ENCODE measurements at regions of chr16 and their contacts with region 1.

Region 1: DNA sequence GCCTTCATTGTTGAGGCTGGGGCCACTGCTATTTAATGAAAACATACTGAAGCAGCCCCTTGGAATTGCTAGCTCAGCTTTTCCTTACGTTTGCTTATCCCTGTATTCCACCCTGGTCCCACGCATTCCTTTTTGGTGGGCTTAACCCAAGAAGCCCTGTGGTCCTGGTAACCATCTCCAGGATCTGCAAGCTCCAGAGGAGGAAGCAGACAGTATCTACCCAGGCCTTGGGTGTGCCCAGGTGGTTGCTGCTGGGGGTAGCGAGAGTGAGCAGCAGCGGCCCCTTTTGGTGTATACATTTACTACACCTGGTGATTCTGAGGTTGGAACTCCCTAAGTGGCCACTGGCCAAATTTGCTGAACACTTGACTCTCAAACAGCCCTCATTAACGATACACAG is 97.7 kb downstream of the CBLN1 start:
- DNase-seq: peak; percentile 73
- H3K4me3 ChIP-seq: no peak overlapping the region
- H3K27ac ChIP-seq: no peak overlapping the region
- H3K4me1 ChIP-seq: peaks cover 0 to 47% (median 25%) of the 10 kb centered on the region in 4 donors
- H3K27me3 ChIP-seq: no peaks in the 10 kb centered on the region
- CTCF ChIP-seq: peak; percentile 30 to 65 (median 54)
- EP300 ChIP-seq: no peak
- POLR2A ChIP-seq: no peak

Region 2: DNA sequence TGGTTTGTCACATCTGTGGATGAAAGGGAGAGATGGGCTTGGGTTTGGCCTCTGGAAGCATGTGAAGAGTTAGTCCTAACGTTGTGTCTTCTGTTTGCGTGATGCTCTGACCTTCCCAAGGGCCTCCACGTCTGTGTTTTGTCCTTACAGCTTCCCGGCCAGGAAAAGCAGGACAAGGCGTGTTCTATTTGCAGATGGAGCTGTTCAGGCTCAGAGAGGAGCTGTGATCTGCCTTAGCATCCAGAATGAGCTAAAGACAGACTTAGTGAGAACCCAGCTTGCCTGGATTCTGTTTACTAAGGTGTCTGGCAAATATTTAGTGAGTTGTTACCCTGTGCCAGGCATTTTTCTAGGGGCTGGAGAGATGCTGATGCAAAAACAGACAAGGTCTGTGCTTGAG is 184.4 kb before region 1 on chr16:
- in situ Hi-C with region 1: loop called in 1 of 4 experiments (anchors 10 kb)
- intact Hi-C with region 1: no loop called
- DNase-seq: no peak
- H3K4me3 ChIP-seq: no peak overlapping the region
- H3K27ac ChIP-seq: peak overlapping the region; percentile 23 to 74 (median 58)
- H3K4me1 ChIP-seq: no peaks in the 10 kb centered on the region
- H3K27me3 ChIP-seq: no peaks in the 10 kb centered on the region
- CTCF ChIP-seq: no peak
- EP300 ChIP-seq: peak; percentile 62
- POLR2A ChIP-seq: no peak

Region 3: GRCh38 chr16:49012961-49013726 is 170.8 kb before region 1 on chr16:
- in situ Hi-C with region 1: no loop called
- intact Hi-C with region 1: no loop called
- DNase-seq: peak; percentile 24
- H3K4me3 ChIP-seq: no peak overlapping the region
- H3K27ac ChIP-seq: peak overlapping the region in 3 of 4 donors; percentile 7 to 51 (median 13)
- H3K4me1 ChIP-seq: no peaks in the 10 kb centered on the region
- H3K27me3 ChIP-seq: no peaks in the 10 kb centered on the region
- CTCF ChIP-seq: no peak
- EP300 ChIP-seq: no peak
- POLR2A ChIP-seq: no peak